ENCODE measurements at regions of chr2 and their contacts with region 1.

Region 1: DNA sequence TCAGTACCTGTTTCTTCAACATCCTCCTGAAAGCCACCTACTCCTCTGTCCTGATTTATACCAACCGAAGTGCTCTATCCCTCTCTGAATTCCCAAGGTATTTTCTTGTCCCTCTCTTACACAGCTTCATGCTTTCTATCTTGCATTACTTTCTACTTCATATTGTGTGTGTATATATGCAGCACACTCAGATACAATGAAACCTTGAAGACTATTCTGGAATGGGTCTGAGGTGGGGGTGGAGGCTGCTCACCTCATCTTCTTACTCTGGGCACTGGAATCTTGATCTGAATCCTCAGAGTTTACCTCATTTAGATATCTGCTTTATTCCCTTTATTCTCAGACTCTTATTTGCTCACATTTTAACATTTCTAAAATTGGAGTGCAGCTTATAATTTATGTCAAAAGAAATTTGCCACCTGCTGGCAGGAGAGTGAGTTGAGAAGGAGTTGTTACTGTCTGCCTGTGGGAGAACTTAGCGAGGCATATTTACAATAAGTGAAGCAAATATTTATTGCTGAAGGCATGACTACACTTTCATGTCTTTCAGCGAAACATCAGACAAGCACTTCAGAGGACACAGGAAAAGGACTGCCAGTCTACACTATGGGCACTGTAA is 16.6 kb upstream of the KIAA2012 start:
- DNase-seq: no peak
- H3K4me3 ChIP-seq: no peak overlapping the region
- CTCF ChIP-seq: no peak

Region 2: DNA sequence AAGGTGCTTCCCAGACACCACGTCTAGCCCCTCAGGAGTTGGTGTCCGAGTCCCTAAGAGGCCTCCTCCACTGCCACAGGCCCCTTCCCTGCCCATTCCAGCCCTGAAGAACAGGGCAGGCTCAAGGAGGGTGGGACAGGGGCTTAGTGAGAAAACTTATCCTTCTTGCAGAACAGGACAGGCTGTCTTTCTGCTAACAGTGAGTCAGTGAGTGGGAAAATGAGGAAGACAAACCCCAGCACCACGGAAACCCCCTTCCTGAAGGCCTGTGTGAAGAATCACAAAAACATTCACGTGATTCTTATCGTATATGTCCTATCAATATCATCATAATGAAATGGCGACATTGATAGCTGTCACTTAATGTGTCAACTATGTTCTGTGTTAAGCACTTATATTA is 13.0 kb before region 1 on chr2:
- CTCF ChIA-PET with region 1: interaction called, 15 read pairs
- POLR2A ChIA-PET with region 1: interaction called, 3 read pairs
- DNase-seq: no peak
- H3K4me3 ChIP-seq: no peak overlapping the region
- CTCF ChIP-seq: no peak